Ascending aorta (tissue), 2 donors: ENCODE measurements at regions of chr19 and their contacts with region 1.

Region 1: GRCh38 chr19:21396893-21397572 is at the start of gene ZNF493:
- DNase-seq: peak; percentile 90 to 97
- H3K4me3 ChIP-seq: peak within 1 kb of the TSS; percentile 84 to 85
- H3K27ac ChIP-seq: peak within 1 kb of the TSS; percentile 74 to 79
- H3K4me1 ChIP-seq: peaks cover 3 to 10% of the 10 kb centered on the region in 2 donors
- H3K27me3 ChIP-seq: no peaks in the 10 kb centered on the region
- CTCF ChIP-seq: no peak
- total RNA-seq, gene ZNF493: 13.0 TPM

Region 2: GRCh38 chr19:21141787-21142464 is 255.1 kb before region 1 on chr19 and contains the start of gene ZNF431:
- intact Hi-C with region 1: loop called (anchors 5 kb)
- DNase-seq: peak; percentile 78 to 95
- H3K4me3 ChIP-seq: peak within 1 kb of the TSS; percentile 74 to 82
- H3K27ac ChIP-seq: peak within 1 kb of the TSS; percentile 68 to 70
- H3K4me1 ChIP-seq: peaks cover 0 to 5% of the 10 kb centered on the region in 2 donors
- H3K27me3 ChIP-seq: no peaks in the 10 kb centered on the region
- CTCF ChIP-seq: no peak
- total RNA-seq, gene ZNF431: 10.2 TPM

Region 3: DNA sequence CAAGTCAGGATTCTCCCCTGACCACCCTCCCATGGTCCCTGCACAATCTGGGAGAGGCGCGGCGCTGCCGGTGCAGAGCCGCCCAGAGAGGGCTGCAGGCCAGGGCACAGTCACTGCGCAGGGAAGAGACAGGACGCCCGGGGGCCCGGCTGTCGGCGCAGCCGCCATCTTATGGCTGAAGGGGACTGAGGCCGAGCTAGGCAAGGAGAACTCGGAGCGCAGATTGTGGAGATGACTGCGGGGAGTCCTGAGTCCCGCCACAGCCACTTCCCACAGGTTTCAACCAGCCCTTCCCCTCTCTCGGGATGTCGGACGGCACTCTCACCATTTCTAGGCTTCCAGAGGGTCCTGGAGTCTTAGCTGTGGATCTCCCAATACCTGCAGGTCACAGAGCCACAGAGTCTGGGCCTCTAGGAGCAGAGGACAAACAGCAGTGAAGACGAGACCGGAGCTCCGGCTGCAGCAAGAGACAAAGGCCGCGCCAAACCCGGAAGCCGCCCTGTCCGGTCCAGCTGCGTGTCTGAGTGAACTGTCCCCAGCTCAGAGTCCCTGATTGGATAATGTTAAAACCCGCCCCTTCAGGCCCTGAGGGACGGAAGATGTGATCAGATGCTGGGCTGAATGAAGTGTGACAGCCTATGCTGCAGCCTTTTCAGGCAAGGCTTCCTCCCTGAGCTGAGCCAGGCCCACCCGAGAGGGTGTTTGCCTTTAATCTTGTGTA is 68.0 kb before region 1 on chr19 and contains the start of gene ZNF708:
- intact Hi-C with region 1: loop called (anchors 2 kb)
- DNase-seq: peak; percentile 78 to 95
- H3K4me3 ChIP-seq: peak within 1 kb of the TSS; percentile 78 to 88
- H3K27ac ChIP-seq: peak within 1 kb of the TSS; percentile 93 to 98
- H3K4me1 ChIP-seq: peaks cover 0 to 3% of the 10 kb centered on the region in 2 donors
- H3K27me3 ChIP-seq: no peaks in the 10 kb centered on the region
- CTCF ChIP-seq: no peak
- total RNA-seq, gene ZNF708: 11.0 TPM

Region 4: DNA sequence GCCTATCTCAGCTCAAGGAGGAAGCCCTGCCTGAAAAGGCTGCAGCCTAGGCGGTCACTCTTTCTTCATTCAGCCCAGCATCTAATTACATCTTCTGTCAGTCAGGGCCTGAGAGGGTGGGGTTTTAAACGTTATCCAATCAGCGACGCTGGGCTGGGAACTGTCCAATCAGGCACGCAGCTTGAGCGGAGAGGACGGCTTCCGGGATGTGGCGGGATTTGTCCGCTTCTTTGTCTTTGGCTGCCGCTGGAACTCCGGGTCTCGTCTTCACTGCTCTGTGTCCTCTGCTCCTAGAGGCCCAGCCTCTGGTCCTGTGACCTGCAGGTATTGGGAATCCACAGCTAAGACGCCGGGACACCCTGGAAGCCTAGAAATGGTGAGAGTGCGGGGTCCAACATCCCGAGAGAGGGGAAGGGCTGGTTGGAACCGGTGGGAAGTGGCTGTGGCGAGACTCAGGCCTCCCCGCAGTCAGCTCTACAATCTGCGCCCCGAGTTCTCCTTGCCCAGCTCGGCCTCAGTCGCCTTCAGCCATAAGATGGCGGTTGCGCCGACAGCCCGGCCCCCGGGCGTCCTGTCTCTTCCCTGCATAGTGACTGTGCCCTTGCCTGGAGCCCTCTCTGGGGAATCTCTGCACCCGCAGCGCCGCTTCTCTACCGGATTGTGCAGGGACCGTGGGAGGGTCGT is 38.1 kb before region 1 on chr19 and contains the start of gene ZNF738:
- intact Hi-C with region 1: loop called (anchors 5 kb)
- DNase-seq: peak; percentile 79 to 95
- H3K4me3 ChIP-seq: peak within 1 kb of the TSS; percentile 66 to 85
- H3K27ac ChIP-seq: peak within 1 kb of the TSS; percentile 64 to 76
- H3K4me1 ChIP-seq: no peaks in the 10 kb centered on the region
- H3K27me3 ChIP-seq: no peaks in the 10 kb centered on the region
- CTCF ChIP-seq: no peak
- total RNA-seq, gene ZNF738: 1.5 TPM

Region 5: DNA sequence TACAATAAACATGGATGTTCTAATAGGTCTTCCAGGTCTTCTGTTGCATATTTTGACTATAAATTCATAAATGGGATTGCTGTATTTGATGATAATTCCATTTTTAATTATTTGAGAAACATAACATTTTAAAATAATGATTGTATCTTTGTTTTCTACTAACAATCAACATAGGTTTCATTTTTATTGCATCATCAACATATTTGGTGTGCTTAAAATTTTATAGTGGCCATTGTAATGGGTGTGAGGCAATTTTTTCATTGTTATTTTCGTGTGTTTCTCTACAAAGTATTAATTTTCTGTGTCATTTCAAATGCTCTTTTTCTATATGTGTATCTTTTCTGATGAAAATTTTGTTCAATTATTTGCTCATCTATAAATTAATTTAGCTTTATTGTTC is 13.1 kb after region 1 on chr19:
- intact Hi-C with region 1: no loop called
- DNase-seq: no peak
- H3K4me3 ChIP-seq: no peak overlapping the region
- H3K27ac ChIP-seq: no peak overlapping the region
- H3K4me1 ChIP-seq: no peaks in the 10 kb centered on the region
- H3K27me3 ChIP-seq: no peaks in the 10 kb centered on the region
- CTCF ChIP-seq: no peak

Region 6: DNA sequence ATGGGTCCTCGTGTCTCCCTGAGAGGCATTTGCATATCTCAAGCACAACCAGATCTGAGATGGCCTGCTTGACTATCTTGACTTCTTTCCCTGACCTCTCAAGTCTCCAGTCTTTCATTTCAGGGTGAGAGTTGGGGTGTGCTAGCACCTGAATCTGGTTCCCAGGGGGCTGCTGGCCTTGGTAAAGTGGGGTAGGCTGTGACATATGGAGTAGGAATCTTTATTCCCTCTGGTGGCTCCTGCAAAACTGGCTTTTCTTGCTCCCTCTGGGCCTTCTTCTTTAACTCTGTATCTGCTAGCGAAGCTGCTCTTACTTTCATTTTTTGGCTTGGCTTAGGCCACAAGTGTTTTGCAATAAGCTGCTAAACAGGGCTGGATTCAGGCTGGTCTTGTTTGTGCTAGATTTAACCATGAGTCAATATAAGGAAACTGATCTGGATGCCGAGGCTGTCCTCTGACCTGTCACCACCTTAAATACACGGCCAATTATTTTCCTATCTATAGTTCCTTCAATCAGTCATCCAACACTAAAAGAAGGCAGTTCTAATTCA is 42.2 kb after region 1 on chr19:
- intact Hi-C with region 1: loop called (anchors 5 kb)
- DNase-seq: no peak
- H3K4me3 ChIP-seq: peak overlapping the region; percentile 34 to 47
- H3K27ac ChIP-seq: peak overlapping the region; percentile 37 to 58
- H3K4me1 ChIP-seq: peaks cover 0 to 8% of the 10 kb centered on the region in 2 donors
- H3K27me3 ChIP-seq: no peaks in the 10 kb centered on the region
- CTCF ChIP-seq: no peak

Region 7: DNA sequence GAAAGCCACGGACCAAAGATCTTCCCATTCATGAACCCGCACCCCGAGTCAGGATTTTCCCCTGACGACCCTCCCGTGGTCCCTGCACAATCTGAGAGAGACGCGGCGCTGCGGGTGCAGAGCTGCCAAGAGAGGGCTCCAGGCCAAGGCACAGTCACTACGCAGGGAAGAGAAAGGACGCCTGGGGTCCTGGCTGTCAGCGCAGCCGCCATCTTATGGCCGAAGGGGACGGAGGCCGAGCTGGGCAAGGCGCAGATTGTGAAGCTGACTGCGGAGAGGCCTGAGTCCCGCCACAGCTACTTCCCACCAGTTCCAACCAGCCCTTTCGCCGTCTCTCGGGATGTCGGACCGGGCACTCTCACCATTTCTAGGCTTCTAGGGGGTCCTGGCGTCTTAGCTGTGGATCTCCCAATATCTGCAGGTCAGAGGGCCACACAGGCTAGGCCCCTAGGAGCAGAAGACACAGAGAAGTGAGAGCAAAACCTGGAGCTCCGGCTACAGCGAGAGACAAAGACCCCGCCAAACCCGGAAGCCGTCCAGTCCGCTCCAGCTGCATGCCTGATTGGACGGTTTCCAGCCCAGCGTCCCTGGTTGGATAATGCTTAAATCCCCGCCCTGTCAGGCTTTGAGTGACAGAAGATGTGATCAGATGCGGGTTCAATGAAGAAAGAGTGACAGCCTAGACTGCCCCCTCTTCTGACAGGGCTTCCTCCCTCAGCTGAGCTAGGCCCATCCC is 370.2 kb after region 1 on chr19 and contains the start of gene ZNF100:
- intact Hi-C with region 1: loop called (anchors 5 kb)
- DNase-seq: peak; percentile 76 to 96
- H3K4me3 ChIP-seq: peak within 1 kb of the TSS; percentile 59 to 86
- H3K27ac ChIP-seq: peak within 1 kb of the TSS; percentile 88 to 89
- H3K4me1 ChIP-seq: peaks cover 0 to 3% of the 10 kb centered on the region in 2 donors
- H3K27me3 ChIP-seq: no peaks in the 10 kb centered on the region
- CTCF ChIP-seq: no peak
- total RNA-seq, gene ZNF100: 4.2 TPM

Region 8: GRCh38 chr19:21851596-21852345 is 454.7 kb after region 1 on chr19:
- intact Hi-C with region 1: loop called (anchors 10 kb)
- DNase-seq: peak; percentile 85 to 98
- H3K4me3 ChIP-seq: peak overlapping the region; percentile 80 to 81
- H3K27ac ChIP-seq: peak overlapping the region; percentile 74 to 81
- H3K4me1 ChIP-seq: peaks cover 0 to 9% of the 10 kb centered on the region in 2 donors
- H3K27me3 ChIP-seq: no peaks in the 10 kb centered on the region
- CTCF ChIP-seq: peak in 1 of 3 experiments; percentile 1